HCT116 (cell line): ENCODE measurements at regions of chr10 and their contacts with region 1.

Region 1: DNA sequence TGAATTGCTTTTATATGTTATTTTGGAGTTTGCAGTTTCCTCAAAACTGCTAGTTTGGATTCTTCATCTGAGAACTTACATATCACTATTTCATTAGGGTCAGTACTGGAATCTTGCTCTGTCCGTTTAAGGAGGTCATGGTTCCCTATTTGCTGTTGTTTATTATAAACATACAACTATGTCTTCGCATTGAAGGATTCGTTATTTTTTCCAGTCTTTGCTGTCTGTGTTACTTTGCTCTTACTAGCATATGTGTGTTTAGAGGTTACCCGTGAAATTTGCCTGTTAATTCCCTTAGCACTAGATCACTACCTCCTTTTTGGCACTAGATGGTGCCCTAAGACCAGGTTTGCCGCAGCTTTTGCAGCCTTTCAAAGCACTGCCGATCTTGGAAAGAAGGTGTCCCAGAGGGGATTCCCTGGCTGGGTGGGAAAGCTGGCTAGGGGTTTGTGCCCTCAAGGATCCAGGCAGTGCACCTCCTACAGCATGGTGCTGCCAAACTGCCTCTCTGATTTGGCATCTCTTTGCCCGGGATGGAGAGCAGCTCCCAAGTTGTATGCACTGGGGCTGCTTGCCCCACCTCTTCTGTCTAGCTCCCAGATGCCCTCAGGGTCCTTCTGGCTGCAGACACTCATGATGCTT is 103.1 kb upstream of the APBB1IP start:
- DNase-seq: peak; percentile 66
- ATAC-seq: peak; percentile 95
- H3K4me3 ChIP-seq: peak overlapping the region; percentile 21 to 48
- H3K27ac ChIP-seq: no peak overlapping the region
- H3K4me1 ChIP-seq: peaks cover 0 to 7% of the 10 kb centered on the region in 2 experiments; a peak in 1 of 4 replicates
- H3K27me3 ChIP-seq: no peaks in the 10 kb centered on the region
- CTCF ChIP-seq: peak; percentile 64 to 84 (median 76)
- POLR2A ChIP-seq: no peak
- RAD21 ChIP-seq: peak; percentile 93

Region 2: GRCh38 chr10:26274391-26274790 is 60.7 kb before region 1 on chr10:
- CTCF ChIA-PET with region 1: no interaction called
- POLR2A ChIA-PET with region 1: no interaction called
- RAD21 ChIA-PET with region 1: no interaction called
- intact Hi-C with region 1: no loop called
- DNase-seq: no peak
- ATAC-seq: no peak
- H3K4me3 ChIP-seq: no peak overlapping the region
- H3K27ac ChIP-seq: no peak overlapping the region
- H3K4me1 ChIP-seq: no peaks in the 10 kb centered on the region
- H3K27me3 ChIP-seq: peaks cover 29% of the 10 kb centered on the region
- CTCF ChIP-seq: no peak
- POLR2A ChIP-seq: no peak
- RAD21 ChIP-seq: no peak

Region 3: DNA sequence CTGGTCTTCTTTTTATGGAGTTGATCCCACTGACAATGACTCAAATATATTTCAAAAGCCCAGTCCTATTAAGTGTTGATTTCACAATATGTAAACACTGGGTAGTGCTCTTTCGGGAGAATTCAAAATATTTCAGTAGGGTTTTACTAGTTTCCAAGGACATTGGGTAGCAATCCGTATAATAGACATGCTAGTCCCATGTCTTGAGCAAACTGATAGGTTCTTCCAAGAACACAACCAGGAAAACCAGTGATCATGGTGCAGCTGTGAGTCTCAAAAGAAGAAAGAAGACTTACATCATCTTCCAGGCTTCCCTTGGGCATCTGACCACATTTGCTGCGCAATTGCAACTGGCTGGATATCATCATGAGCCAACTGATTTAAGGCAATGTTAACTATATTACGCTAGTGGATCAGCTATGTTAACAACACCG is 43.8 kb after region 1 on chr10:
- CTCF ChIA-PET with region 1: no interaction called
- POLR2A ChIA-PET with region 1: no interaction called
- RAD21 ChIA-PET with region 1: no interaction called
- intact Hi-C with region 1: loop called (anchors 2 kb)
- DNase-seq: no peak
- ATAC-seq: no peak
- H3K4me3 ChIP-seq: no peak overlapping the region
- H3K27ac ChIP-seq: no peak overlapping the region
- H3K4me1 ChIP-seq: no peaks in the 10 kb centered on the region
- H3K27me3 ChIP-seq: peaks cover 27% of the 10 kb centered on the region
- CTCF ChIP-seq: no peak
- POLR2A ChIP-seq: no peak
- RAD21 ChIP-seq: no peak

Region 4: DNA sequence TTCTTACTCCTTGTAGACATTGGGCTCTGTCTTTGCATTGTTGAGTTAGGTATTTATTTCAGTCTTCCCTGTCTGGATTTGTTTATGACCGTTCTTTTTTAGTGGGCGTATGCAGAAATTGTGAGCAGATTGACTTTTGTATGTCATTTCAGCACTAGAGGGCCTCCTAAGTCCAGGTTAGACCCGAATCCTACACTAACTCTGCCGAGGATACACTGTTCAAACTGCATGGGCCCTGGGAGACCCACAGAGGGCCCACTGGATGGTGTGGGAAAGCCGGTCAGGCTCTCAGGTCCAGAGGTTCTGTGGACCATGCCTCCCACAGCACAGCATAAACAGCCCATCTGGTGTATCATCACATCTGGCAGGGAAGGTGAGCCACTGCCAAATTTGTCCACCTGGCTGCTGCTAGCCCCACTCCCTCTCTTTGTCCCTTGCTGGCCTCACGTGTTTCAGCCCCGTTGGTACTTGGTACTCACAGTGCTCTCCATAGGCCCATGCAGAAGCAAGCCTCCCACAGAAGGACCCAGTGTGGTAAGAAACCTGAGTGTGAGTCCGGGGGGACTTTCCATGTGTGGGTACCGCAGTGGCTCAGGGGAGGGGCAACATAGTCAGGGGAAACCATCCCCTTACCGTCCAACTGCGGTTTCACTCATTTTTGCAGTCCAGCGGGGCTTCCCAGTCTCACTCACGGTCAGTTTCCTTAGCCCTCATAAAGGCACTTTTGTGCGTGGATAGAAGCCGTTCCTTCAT is 215.9 kb after region 1 on chr10:
- CTCF ChIA-PET with region 1: interaction called, 40 read pairs
- POLR2A ChIA-PET with region 1: no interaction called
- RAD21 ChIA-PET with region 1: interaction called in 1 of 2 experiments, 3 read pairs
- intact Hi-C with region 1: loop called (anchors 2 kb)
- DNase-seq: peak; percentile 51
- ATAC-seq: peak; percentile 99
- H3K4me3 ChIP-seq: no peak overlapping the region
- H3K27ac ChIP-seq: no peak overlapping the region
- H3K4me1 ChIP-seq: no peaks in the 10 kb centered on the region
- H3K27me3 ChIP-seq: peaks cover 12% of the 10 kb centered on the region; the same call in 1 of the 2 replicates
- CTCF ChIP-seq: peak; percentile 51 to 64 (median 57); a peak in 5 of 6 replicates
- POLR2A ChIP-seq: no peak
- RAD21 ChIP-seq: peak; percentile 73

Region 5: DNA sequence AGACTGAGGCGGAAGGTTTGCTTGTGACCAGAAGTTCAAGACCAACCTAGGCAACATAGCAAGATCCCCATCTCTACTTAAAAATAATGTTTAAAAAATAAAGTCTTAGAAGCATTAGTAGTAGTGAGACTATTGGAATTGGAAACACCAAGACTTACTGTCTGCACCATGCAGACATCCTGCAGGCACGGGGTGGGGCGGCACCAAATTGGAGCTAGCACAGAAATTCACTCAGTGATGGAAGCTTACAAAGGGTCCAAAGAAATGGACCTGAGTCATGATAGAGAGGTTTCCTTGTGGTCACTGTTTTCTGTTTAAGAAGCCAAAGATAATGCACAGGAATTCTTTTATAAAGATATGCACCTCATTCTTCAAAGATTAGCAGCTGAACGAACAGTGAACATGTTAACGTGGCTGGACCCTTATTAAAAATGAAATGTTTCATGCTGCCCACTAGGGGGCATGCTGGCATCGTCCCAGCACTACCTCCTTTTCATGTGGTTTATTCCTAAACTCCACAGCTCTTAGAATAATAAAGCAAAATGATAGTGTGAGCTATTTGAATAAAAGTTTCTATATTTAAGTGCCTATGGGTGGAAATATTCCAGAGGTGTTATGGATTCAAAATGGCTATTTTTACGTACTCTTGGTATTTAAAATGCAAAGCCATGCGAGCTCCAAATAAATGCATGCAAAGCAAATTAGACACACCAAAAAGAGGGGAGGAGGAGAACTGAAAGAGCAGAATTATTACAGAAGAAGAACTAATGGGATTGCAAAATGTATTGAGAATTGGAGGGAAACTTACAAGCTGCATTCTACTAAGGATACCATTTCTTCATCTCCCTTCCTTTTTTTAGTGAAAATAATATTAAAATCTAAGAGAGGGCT is 391.0 kb after region 1 on chr10:
- CTCF ChIA-PET with region 1: interaction called, 3 read pairs
- POLR2A ChIA-PET with region 1: no interaction called
- RAD21 ChIA-PET with region 1: no interaction called
- intact Hi-C with region 1: loop called (anchors 1 kb)
- DNase-seq: peak; percentile 13
- ATAC-seq: peak; percentile 69
- H3K4me3 ChIP-seq: no peak overlapping the region
- H3K27ac ChIP-seq: no peak overlapping the region
- H3K4me1 ChIP-seq: peaks cover 0 to 3% of the 10 kb centered on the region in 2 experiments; a peak in 1 of 4 replicates
- H3K27me3 ChIP-seq: no peaks in the 10 kb centered on the region
- CTCF ChIP-seq: peak; percentile 70 to 91 (median 72)
- POLR2A ChIP-seq: no peak
- RAD21 ChIP-seq: peak; percentile 88

Region 6: GRCh38 chr10:27360581-27361172 is 1025.6 kb after region 1 on chr10:
- CTCF ChIA-PET with region 1: no interaction called
- POLR2A ChIA-PET with region 1: no interaction called
- RAD21 ChIA-PET with region 1: no interaction called
- intact Hi-C with region 1: loop called (anchors 10 kb)
- DNase-seq: peak; percentile 68
- ATAC-seq: peak; percentile 98
- H3K4me3 ChIP-seq: no peak overlapping the region
- H3K27ac ChIP-seq: no peak overlapping the region
- H3K4me1 ChIP-seq: no peaks in the 10 kb centered on the region
- H3K27me3 ChIP-seq: no peaks in the 10 kb centered on the region
- CTCF ChIP-seq: peak; percentile 85 to 89 (median 87)
- POLR2A ChIP-seq: no peak
- RAD21 ChIP-seq: peak; percentile 94